ENCODE measurements at regions of chr6 and their contacts with region 1.

Region 1: GRCh38 chr6:100116411-100117194 is 122.6 kb upstream of the MCHR2 start:
- DNase-seq: peak; percentile 62

Region 2: DNA sequence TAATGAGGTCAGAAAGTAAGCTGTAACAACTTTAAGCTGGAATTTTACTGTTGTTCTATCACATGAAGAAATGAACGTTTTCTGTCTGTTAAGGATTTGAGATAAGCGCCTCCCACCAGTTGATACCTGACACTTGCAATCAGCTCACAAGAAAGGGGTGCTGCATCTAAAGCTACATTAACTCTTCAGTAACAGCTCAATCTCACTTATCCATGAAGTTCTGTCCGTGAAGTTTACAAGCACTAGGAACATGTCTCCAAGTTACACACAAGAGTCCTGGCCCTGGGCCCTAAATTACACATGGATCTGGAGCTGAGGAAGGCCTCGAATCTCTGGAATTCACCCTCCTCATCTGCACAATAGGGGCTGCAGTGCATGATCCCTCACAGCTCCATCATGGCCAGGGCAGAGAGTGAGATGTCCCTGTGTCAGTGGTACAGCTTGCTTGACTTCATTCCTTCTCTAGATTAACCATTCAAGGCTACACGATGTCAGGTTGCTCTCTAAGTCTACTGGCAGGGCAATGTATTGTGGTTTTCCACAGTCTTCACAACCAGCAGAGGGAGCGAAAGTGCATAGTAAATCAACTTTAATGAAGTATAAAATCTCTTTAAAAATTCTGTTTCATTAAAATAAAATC is 59.8 kb after region 1 on chr6:
- in situ Hi-C with region 1: loop called (anchors 10 kb)
- DNase-seq: peak; percentile 66

Region 3: GRCh38 chr6:100300221-100300736 is 183.7 kb after region 1 on chr6:
- in situ Hi-C with region 1: loop called (anchors 25 kb)
- DNase-seq: peak; percentile 89

Region 4: DNA sequence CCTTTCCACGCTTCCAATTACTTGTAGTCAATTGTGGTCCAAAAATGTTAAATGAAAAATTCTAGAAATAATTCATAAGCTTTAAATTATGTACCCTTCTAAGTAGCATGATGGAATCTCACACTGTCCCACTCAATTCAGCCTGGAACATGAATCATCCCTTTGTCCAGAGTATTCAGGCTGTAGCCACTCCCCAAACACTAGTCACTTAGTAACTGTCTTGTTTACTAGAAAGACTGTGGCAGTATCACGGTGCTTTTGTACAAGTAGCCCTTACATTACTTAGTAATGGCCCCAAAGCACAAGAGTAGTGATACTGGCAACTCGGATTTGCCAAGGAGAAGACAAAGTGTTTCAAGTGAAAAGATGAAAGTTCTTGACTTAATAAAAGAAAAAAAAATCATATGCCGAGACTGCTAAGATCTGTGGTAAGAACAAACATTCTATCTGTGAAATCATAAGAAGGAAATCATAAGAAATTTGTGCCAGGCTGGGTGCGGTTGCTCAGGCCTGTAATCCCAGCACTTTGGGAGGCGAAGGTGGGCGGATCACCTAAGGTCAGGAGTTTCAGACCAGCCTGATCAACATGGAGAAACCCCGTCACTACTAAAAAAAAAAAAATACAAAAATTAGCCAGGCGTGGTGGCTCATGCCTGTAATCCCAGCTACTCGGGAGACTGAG is 516.6 kb after region 1 on chr6:
- in situ Hi-C with region 1: loop called (anchors 25 kb)
- DNase-seq: peak; percentile 81